ENCODE measurements at regions of chr20 and their contacts with region 1.

Region 1: GRCh38 chr20:21529863-21530262 is 16.0 kb upstream of the NKX2-2 start:
- DNase-seq: no peak
- ATAC-seq: peak; percentile 79
- H3K4me3 ChIP-seq: no peak overlapping the region
- H3K27ac ChIP-seq: no peak overlapping the region
- H3K4me1 ChIP-seq: no peaks in the 10 kb centered on the region
- H3K27me3 ChIP-seq: no peaks in the 10 kb centered on the region; a peak in 3 of 4 replicates
- CTCF ChIP-seq: peak; percentile 45 to 54 (median 45); a peak in 4 of 6 replicates
- EP300 ChIP-seq: no peak
- POLR2A ChIP-seq: no peak
- RAD21 ChIP-seq: peak; percentile 20; the same call in 1 of the 2 replicates

Region 2: GRCh38 chr20:21548390-21549035 is 18.6 kb after region 1 on chr20:
- CTCF ChIA-PET with region 1: interaction called, 20 read pairs
- POLR2A ChIA-PET with region 1: interaction called, 3 read pairs
- RAD21 ChIA-PET with region 1: interaction called, 8 read pairs
- SMC1A ChIA-PET with region 1: interaction called, 14 read pairs
- in situ Hi-C with region 1: no loop called
- intact Hi-C with region 1: no loop called
- DNase-seq: peak; percentile 46
- ATAC-seq: peak; percentile 86
- H3K4me3 ChIP-seq: no peak overlapping the region
- H3K27ac ChIP-seq: no peak overlapping the region
- H3K4me1 ChIP-seq: peaks cover 4% of the 10 kb centered on the region
- H3K27me3 ChIP-seq: peaks cover 0 to 2% of the 10 kb centered on the region in 2 experiments; a peak in 1 of 4 replicates
- CTCF ChIP-seq: no peak
- EP300 ChIP-seq: peak in 1 of 2 experiments; percentile 43; a peak in 2 of 4 replicates
- POLR2A ChIP-seq: no peak
- RAD21 ChIP-seq: no peak

Region 3: DNA sequence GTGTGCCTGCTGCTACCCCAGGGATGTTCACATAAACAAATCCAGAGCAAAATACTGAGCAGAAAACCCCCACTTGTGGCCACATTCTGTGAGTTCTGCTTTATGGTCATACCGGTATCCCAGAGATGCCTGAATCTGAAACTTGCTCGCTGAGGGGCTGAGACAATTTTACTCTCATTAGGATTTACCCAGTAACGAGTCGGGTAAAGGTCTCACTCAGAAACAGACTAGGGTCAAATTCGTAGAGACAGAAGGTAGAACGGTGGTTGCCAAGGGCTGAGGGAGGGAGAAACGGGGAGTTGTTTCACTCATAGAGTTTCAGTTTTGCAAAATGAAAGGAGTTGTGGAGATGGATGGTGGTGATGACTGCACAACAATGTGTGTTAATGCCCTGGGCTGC is 29.4 kb after region 1 on chr20:
- CTCF ChIA-PET with region 1: interaction called, 24 read pairs
- POLR2A ChIA-PET with region 1: interaction called, 3 read pairs
- RAD21 ChIA-PET with region 1: interaction called, 17 read pairs
- SMC1A ChIA-PET with region 1: interaction called, 25 read pairs
- in situ Hi-C with region 1: no loop called
- intact Hi-C with region 1: no loop called
- DNase-seq: peak; percentile 48
- ATAC-seq: peak; percentile 85
- H3K4me3 ChIP-seq: 0 out of 2 replicates have a peak overlapping the region, but pooled peaks have one; percentile 17
- H3K27ac ChIP-seq: no peak overlapping the region
- H3K4me1 ChIP-seq: peaks cover 4% of the 10 kb centered on the region; the same call in 1 of the 2 replicates
- H3K27me3 ChIP-seq: no peaks in the 10 kb centered on the region
- CTCF ChIP-seq: no peak
- EP300 ChIP-seq: no peak
- POLR2A ChIP-seq: no peak
- RAD21 ChIP-seq: no peak

Region 4: GRCh38 chr20:21577551-21577950 is 47.7 kb after region 1 on chr20:
- CTCF ChIA-PET with region 1: interaction called, 149 read pairs
- POLR2A ChIA-PET with region 1: no interaction called
- RAD21 ChIA-PET with region 1: interaction called, 55 read pairs
- SMC1A ChIA-PET with region 1: interaction called, 131 read pairs
- in situ Hi-C with region 1: loop called (anchors 10 kb)
- intact Hi-C with region 1: loop called (anchors 1 kb)
- DNase-seq: no peak
- ATAC-seq: no peak
- H3K4me3 ChIP-seq: no peak overlapping the region
- H3K27ac ChIP-seq: no peak overlapping the region
- H3K4me1 ChIP-seq: no peaks in the 10 kb centered on the region
- H3K27me3 ChIP-seq: peaks cover 0 to 3% of the 10 kb centered on the region in 2 experiments; a peak in 1 of 4 replicates
- CTCF ChIP-seq: no peak
- EP300 ChIP-seq: no peak
- POLR2A ChIP-seq: no peak
- RAD21 ChIP-seq: no peak